ENCODE measurements at regions of chr11 and their contacts with region 1.

Region 1: GRCh38 chr11:131737357-131737756 is 366.9 kb downstream of the NTM start:
- DNase-seq: no peak
- H3K4me3 ChIP-seq: no peak overlapping the region
- CTCF ChIP-seq: no peak

Region 2: DNA sequence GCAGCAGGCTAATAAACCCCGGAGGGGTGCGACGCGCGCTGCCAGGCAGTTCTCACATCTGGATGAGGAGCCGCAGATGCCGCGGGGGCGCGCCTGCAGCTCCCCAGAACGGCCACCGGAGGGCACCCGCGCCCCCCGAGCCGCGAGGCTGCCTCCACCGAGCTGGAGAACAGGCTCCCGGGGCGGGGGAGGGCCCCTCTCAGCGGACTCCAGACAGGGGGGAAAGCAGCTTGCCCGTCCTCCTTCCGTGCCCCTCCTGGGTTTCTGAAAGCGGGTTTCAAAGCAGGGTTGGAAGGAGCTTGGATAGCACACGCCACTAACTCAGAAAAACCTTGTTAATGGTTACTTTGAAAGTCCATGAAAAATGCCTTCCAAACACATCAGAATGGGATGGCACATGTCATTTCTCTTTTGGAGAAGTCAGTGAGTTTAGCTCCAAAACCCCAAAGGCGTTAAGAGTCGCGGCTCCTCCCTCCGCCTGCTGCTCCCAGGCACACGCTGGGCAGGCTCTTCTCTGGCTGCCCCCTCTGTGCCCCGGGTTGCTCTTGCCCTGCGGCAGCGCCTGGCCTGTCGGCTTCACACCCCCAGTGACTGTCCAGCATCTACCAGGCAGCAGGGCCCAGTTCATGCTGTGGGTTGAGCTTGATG is 49.2 kb before region 1 on chr11:
- CTCF ChIA-PET with region 1: interaction called, 29 read pairs
- POLR2A ChIA-PET with region 1: no interaction called
- DNase-seq: no peak
- H3K4me3 ChIP-seq: peak overlapping the region; percentile 43
- CTCF ChIP-seq: peak; percentile 96

Region 3: DNA sequence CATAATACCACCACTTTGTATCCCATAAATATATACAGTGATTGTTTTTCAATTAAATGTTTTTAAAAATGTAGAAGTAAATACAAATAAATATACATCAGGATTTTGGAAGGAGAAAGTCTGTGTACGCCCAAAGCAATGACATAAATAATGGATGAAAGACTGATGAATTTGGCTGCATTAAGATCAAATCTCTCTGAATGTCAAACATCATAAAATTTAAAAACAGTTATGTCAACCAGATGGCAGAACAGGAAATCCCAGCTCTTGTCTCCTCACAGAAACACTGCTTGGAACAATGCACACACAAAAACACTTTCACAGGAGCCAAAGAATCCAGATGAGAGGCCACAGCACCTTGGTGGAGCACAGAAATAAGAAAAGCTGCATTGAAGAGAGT is 34.0 kb before region 1 on chr11:
- CTCF ChIA-PET with region 1: no interaction called
- POLR2A ChIA-PET with region 1: no interaction called
- DNase-seq: no peak
- H3K4me3 ChIP-seq: no peak overlapping the region
- CTCF ChIP-seq: no peak